ENCODE measurements at regions of chrX and their contacts with region 1.

Region 1: DNA sequence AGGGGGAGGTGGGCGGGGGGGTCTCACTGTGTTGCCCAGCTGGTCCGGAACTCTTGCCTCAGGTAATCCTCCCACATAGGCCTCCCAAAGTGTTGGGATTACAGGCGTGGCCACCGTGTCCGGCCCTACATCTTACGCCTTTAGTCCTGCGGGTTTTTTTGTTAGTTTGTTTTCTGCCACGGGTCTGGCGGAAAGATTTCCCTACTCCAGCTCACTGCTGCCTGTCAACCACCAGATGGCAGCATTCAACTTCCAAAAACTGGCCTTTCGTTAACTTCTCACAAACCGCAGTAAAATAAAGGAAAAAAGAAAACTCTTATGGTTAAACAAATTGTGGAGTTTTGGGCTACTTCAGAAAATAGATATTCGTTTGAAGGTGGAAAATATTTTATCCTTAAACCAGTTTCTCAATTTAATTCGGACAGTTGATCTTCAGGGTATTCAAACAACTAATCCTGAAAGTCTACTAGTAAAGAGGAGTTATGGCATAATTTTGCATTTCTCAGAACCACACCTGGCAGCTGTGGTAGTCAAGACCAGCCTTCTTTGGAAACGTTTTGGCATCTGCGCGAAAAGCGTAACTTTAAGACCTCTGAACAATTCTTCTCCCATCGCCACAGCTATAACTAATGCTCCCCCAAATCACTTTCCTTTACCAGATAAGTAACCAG is 41.1 kb downstream of the LUZP4 start:
- DNase-seq: peak in 1 of 2 donors; percentile 28
- ATAC-seq: peak in 6 of 8 donors; percentile 33 to 69 (median 53)
- H3K4me3 ChIP-seq: peak overlapping the region in 3 of 10 donors; percentile 27 to 31 (median 28)
- H3K27ac ChIP-seq: no peak overlapping the region
- H3K4me1 ChIP-seq: peaks cover 0 to 5% (median 0%) of the 10 kb centered on the region in 9 donors
- H3K27me3 ChIP-seq: peaks cover 0 to 23% (median 0%) of the 10 kb centered on the region in 7 donors
- CTCF ChIP-seq: peak; percentile 53 to 89 (median 75)

Region 2: DNA sequence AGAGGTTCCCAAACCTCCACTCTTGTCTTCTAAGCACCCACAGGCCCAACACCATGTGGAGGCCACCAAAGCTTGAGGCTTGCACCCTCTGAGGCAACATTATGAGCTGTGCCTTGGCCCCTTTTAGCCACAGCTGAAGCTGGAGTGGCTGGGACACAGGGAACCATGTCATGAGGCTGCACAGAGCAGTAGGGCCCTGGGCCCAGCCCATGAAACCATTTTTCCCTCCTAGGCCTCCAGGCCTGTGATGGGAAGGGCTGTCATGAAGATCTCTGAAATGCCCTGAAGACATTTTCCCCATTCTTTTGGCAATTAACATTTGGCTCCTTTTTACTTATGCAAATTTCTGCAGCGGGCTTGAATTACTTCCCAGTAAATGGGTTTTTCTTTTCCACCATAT is 126.6 kb before region 1 on chrX:
- intact Hi-C with region 1: no loop called
- DNase-seq: no peak
- ATAC-seq: no peak
- H3K4me3 ChIP-seq: no peak overlapping the region
- H3K27ac ChIP-seq: no peak overlapping the region
- H3K4me1 ChIP-seq: no peaks in the 10 kb centered on the region
- H3K27me3 ChIP-seq: peaks cover 0 to 19% (median 0%) of the 10 kb centered on the region in 7 donors
- CTCF ChIP-seq: no peak

Region 3: GRCh38 chrX:115449742-115450141 is 119.1 kb after region 1 on chrX:
- intact Hi-C with region 1: loop called in 1 of 10 experiments (anchors 10 kb)
- DNase-seq: peak; percentile 54 to 56
- ATAC-seq: peak in 7 of 8 donors; percentile 31 to 73 (median 49)
- H3K4me3 ChIP-seq: no peak overlapping the region
- H3K27ac ChIP-seq: peak overlapping the region in 2 of 10 donors; percentile 15 to 29
- H3K4me1 ChIP-seq: peaks cover 0 to 17% (median 4%) of the 10 kb centered on the region in 9 donors
- H3K27me3 ChIP-seq: peaks cover 0 to 57% (median 0%) of the 10 kb centered on the region in 7 donors
- CTCF ChIP-seq: no peak

Region 4: GRCh38 chrX:115472131-115472530 is 141.5 kb after region 1 on chrX:
- intact Hi-C with region 1: loop called in 1 of 10 experiments (anchors 10 kb)
- DNase-seq: no peak
- ATAC-seq: no peak
- H3K4me3 ChIP-seq: no peak overlapping the region
- H3K27ac ChIP-seq: no peak overlapping the region
- H3K4me1 ChIP-seq: peaks cover 0 to 7% (median 0%) of the 10 kb centered on the region in 9 donors
- H3K27me3 ChIP-seq: peaks cover 0 to 38% (median 0%) of the 10 kb centered on the region in 7 donors
- CTCF ChIP-seq: no peak

Region 5: GRCh38 chrX:115642895-115643530 is 312.4 kb after region 1 on chrX:
- intact Hi-C with region 1: loop called in 9 of 10 experiments (anchors 1 to 10 kb)
- DNase-seq: peak in 1 of 2 donors; percentile 17
- ATAC-seq: peak in 2 of 8 donors; percentile 55 to 69
- H3K4me3 ChIP-seq: no peak overlapping the region
- H3K27ac ChIP-seq: peak overlapping the region in 6 of 10 donors; percentile 1 to 62 (median 44)
- H3K4me1 ChIP-seq: peaks cover 0 to 34% (median 2%) of the 10 kb centered on the region in 9 donors
- H3K27me3 ChIP-seq: peaks cover 0 to 66% (median 0%) of the 10 kb centered on the region in 7 donors
- CTCF ChIP-seq: peak; percentile 76 to 99 (median 82)

Region 6: DNA sequence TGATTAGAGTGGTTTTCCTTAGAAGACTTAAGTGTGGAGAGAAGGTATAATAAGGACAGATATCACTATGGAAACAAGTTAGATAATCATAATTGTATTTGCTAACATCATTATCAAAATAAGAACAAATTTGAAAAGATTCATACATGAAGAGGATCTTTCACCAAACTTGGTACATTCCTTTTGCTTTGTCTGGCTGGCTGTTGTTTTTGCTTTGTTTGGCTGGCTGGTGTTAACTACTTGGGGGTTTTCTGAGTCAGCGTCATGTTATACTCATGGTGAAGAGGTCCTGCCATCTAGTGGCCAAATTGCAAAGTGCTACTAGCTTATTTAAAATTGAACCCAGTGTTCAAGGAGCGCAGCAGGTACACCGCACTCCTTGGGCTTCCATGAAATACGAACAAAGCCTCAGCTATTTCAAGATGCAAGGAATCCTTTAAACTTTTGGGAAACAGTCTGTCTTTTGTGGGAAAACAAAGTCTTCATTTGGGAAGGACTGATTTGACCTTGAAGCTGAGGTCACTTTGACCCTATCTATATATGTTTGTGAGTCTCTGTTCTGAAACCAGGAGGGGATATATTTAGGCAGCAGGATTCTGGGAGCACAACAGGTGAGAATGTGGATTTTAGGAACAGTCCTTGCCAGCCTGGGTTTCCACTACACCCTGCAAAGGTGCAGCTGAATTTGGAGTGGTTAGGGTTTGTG is 360.0 kb after region 1 on chrX:
- intact Hi-C with region 1: loop called in 6 of 10 experiments (anchors 2 to 10 kb)
- DNase-seq: peak in 1 of 2 donors; percentile 57
- ATAC-seq: peak in 6 of 8 donors; percentile 64 to 80 (median 68)
- H3K4me3 ChIP-seq: no peak overlapping the region
- H3K27ac ChIP-seq: peak overlapping the region in 3 of 10 donors; percentile 8 to 68 (median 10)
- H3K4me1 ChIP-seq: peaks cover 0 to 7% (median 0%) of the 10 kb centered on the region in 9 donors
- H3K27me3 ChIP-seq: peaks cover 0 to 72% (median 0%) of the 10 kb centered on the region in 7 donors
- CTCF ChIP-seq: peak; percentile 61 to 89 (median 70)

Region 7: DNA sequence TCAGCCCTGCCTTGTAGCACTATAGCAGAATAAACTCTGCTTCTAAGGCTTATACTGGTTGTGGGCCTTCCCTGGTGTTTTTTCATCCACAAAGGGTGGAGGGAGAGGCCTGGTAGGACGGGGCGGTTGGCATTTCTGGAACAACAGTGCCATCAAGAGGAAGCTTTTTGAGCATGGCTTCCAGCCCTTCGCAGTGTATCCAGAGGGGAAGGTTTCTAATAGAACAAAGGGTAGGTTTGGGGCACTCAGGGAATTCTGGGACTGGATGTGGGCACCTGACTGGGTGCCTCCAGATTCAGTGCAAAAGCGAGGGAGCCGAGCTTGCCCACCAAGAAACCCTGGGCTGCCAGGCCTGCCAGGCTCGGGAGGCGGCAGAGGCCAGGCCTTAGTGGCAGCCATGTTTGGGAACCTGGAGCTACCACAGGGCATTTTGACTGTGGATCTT is 610.3 kb after region 1 on chrX:
- intact Hi-C with region 1: loop called in 1 of 10 experiments (anchors 5 kb)
- DNase-seq: peak in 1 of 2 donors; percentile 51
- ATAC-seq: peak in 6 of 8 donors; percentile 63 to 98 (median 86)
- H3K4me3 ChIP-seq: peak overlapping the region in 1 of 10 donors; percentile 19
- H3K27ac ChIP-seq: peak overlapping the region in 1 of 10 donors; percentile 32
- H3K4me1 ChIP-seq: peaks cover 0 to 19% (median 0%) of the 10 kb centered on the region in 9 donors
- H3K27me3 ChIP-seq: peaks cover 0 to 41% (median 0%) of the 10 kb centered on the region in 7 donors
- CTCF ChIP-seq: peak in 5 of 9 donors; percentile 35 to 56 (median 43)

Measured in heart right ventricle (tissue), 16 donors.